AG04449 (cell line): ENCODE measurements at regions of chr11 and their contacts with region 1.

Region 1: DNA sequence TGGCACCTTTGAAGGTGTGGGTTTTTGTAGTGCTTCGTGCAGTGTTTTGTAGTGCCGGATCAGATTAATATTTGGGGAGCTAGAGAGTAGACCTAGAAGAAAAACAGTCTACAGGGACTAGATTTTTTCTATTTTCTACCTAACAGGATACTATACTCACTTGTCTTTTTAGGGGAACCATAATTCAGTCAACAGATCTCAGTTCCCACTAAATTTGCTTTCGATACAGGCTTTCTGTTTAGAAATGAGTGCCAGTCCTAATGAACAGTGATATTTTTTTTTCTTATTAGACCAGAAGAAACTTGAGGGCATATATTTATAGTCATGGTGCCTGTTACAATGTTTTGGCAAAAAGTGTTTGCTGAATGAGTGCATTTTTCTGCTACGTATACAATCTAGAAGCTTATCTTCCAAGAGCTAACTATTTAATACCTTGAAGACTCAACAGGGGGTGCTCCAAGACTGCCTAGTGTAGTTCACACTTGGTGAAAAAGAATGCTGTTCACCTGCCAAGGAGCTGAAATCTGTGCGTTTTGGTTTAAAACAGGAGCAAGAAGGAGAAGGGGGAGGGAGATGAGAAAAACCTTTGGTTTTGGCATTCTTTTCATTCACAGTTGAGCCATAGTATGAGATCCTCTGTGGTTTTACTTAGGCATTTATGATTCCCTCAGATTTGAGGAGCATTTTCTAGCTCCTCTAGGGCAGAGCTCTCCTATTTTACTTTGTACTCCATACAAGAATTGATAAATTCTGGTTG is 44.9 kb upstream of the VSTM5 start:
- DNase-seq: peak; percentile 79
- H3K4me3 ChIP-seq: no peak overlapping the region
- CTCF ChIP-seq: peak; percentile 68

Region 2: GRCh38 chr11:93908689-93909088 is 13.4 kb after region 1 on chr11:
- CTCF ChIA-PET with region 1: interaction called, 73 read pairs
- POLR2A ChIA-PET with region 1: no interaction called
- DNase-seq: peak; percentile 82
- H3K4me3 ChIP-seq: no peak overlapping the region
- CTCF ChIP-seq: no peak

Region 3: DNA sequence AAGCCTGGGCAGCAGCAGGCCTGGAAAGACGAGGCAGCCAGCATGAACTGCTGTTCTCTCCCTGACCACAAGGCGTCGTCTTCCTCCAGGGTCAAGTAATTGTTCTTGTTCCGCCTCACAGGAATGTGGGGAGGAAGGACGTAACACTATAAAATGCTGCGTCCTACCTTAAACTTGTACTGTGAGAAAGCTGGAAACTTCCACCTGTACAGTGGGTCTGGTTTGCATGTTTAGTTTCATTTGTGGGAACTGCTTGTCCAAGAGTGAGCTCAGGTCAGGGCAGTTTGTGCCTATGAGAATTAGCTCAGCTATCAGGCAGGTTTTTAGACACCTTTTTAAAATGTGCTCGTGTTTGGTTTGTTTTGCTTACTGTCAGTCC is 288.6 kb after region 1 on chr11:
- CTCF ChIA-PET with region 1: interaction called, 70 read pairs
- POLR2A ChIA-PET with region 1: no interaction called
- DNase-seq: no peak
- H3K4me3 ChIP-seq: no peak overlapping the region
- CTCF ChIP-seq: peak; percentile 86

Region 4: GRCh38 chr11:94450048-94450447 is 554.8 kb after region 1 on chr11:
- CTCF ChIA-PET with region 1: interaction called, 10 read pairs
- POLR2A ChIA-PET with region 1: no interaction called
- DNase-seq: no peak
- H3K4me3 ChIP-seq: no peak overlapping the region
- CTCF ChIP-seq: no peak

Region 5: GRCh38 chr11:94504689-94505293 is 609.5 kb after region 1 on chr11:
- CTCF ChIA-PET with region 1: interaction called, 147 read pairs
- POLR2A ChIA-PET with region 1: no interaction called
- DNase-seq: no peak
- H3K4me3 ChIP-seq: no peak overlapping the region
- CTCF ChIP-seq: peak; percentile 26

Region 6: DNA sequence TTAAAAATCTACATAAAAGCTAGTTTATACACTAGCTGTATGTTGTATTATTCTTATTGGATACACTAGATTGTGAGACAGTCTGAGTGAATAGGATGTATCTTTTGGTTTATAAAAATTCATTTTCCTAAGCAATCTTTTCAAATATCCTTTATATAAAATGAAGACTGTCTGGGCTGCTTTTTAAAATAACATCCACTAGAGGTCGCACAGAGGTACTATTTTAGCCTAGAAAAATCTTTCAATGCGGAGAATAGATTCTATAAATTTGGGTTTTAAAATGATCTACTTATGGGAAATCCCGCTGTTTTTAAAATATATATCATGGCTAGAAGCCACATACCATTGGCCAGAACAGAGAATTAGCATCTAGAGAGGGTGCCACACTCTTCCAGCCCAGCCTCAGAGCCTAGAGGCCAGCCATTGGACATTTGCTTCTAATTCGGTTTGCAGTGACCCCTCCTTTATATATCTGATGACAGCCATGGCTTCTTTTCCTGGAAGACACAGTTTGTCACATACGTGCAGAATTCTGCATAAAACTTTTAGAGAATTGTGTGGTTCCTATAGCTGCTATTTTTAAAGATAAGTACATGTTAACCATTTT is 624.3 kb after region 1 on chr11:
- CTCF ChIA-PET with region 1: interaction called, 20 read pairs
- POLR2A ChIA-PET with region 1: no interaction called
- DNase-seq: no peak
- H3K4me3 ChIP-seq: no peak overlapping the region
- CTCF ChIP-seq: peak; percentile 10